IMR-90 (cell line): ENCODE measurements at regions of chr10 and their contacts with region 1.

Region 1: GRCh38 chr10:84054743-84055142 is 84.6 kb upstream of the GHITM start:
- DNase-seq: no peak
- ATAC-seq: no peak
- H3K4me3 ChIP-seq: no peak overlapping the region
- H3K27ac ChIP-seq: no peak overlapping the region
- H3K4me1 ChIP-seq: no peaks in the 10 kb centered on the region
- H3K27me3 ChIP-seq: no peaks in the 10 kb centered on the region
- CTCF ChIP-seq: no peak
- POLR2A ChIP-seq: no peak
- RAD21 ChIP-seq: no peak

Region 2: GRCh38 chr10:84012831-84013458 is 41.8 kb before region 1 on chr10:
- CTCF ChIA-PET with region 1: no interaction called
- POLR2A ChIA-PET with region 1: no interaction called
- dilution Hi-C with region 1: no loop called
- in situ Hi-C with region 1: no loop called
- intact Hi-C with region 1: loop called (anchors 1 kb)
- DNase-seq: no peak
- ATAC-seq: no peak
- H3K4me3 ChIP-seq: no peak overlapping the region
- H3K27ac ChIP-seq: no peak overlapping the region
- H3K4me1 ChIP-seq: no peaks in the 10 kb centered on the region
- H3K27me3 ChIP-seq: no peaks in the 10 kb centered on the region
- CTCF ChIP-seq: no peak
- POLR2A ChIP-seq: no peak
- RAD21 ChIP-seq: no peak

Region 3: DNA sequence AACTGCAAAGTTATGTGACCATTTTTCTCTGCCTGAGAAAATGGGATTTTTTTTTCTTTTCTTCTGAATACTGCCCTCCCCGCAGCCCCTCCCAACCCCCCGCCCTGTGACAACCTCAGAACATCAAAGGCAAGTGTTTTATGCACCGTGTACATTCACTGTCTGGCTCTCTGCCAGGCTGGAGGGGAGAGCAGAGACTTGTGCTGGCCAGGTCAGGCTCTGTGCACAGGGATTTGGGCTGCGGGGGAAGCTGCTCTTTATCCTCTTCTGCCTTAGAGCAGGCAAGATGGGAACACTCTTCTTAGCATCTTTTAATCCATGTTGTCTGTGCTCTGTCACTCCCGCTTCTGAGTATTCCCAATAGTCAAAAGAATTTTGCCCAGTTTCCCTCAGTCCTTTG is 468.8 kb after region 1 on chr10:
- CTCF ChIA-PET with region 1: no interaction called
- POLR2A ChIA-PET with region 1: no interaction called
- dilution Hi-C with region 1: no loop called
- in situ Hi-C with region 1: no loop called
- intact Hi-C with region 1: no loop called
- DNase-seq: no peak
- ATAC-seq: peak; percentile 11
- H3K4me3 ChIP-seq: no peak overlapping the region
- H3K27ac ChIP-seq: no peak overlapping the region
- H3K4me1 ChIP-seq: no peaks in the 10 kb centered on the region
- H3K27me3 ChIP-seq: no peaks in the 10 kb centered on the region
- CTCF ChIP-seq: no peak
- POLR2A ChIP-seq: no peak
- RAD21 ChIP-seq: no peak